MCF 10A (cell line): ENCODE measurements at regions of chr6 and their contacts with region 1.

Region 1: DNA sequence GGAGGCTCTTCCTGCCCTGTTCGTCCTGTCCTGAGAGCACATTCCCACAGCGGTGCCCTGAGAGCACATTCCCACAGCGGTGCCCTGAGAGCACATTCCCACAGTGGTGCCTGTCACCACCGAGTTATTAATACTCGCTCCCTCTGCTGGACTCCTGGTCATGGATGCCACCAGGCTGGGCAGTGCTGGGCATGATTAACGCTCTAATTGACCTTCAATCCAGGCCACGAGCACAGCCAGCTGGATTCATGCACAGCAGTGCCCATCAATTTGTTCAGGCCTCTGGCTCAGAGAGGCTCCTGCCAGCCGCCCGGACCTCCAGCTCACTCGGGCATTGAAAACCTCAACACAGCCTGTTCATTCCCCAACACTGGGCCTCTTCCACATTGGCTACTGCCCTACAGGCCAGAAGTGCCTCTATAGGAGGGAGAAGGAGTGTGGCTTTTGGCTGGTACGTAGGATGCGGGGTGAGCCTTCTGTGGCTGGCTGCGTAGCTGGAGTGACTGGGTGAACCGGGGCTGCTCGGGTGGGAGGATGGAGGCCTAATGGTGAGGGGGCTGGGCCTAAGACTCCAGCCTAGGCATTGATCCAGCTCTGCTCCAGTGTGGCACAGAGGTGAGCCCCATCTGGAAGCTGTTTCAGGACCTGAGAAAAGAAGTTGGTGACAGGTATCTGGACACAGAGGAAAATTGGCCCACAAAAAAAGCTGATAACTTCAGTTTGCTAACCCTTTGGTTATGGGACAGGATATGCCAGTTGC is 9.3 kb downstream of the IP6K3 start:
- DNase-seq: no peak
- H3K4me3 Mint-ChIP-seq: no peak overlapping the region
- H3K27ac Mint-ChIP-seq: no peak overlapping the region
- H3K4me1 Mint-ChIP-seq: peaks cover 5% of the 10 kb centered on the region
- H3K27me3 Mint-ChIP-seq: no peaks in the 10 kb centered on the region
- CTCF ChIP-seq: no peak

Region 2: GRCh38 chr6:33592411-33593054 is 144.9 kb before region 1 on chr6:
- CTCF ChIA-PET with region 1: no interaction called
- POLR2A ChIA-PET with region 1: no interaction called
- intact Hi-C with region 1: no loop called
- DNase-seq: no peak
- H3K4me3 Mint-ChIP-seq: no peak overlapping the region
- H3K27ac Mint-ChIP-seq: peak overlapping the region; percentile 11
- H3K4me1 Mint-ChIP-seq: peaks cover 31% of the 10 kb centered on the region
- H3K27me3 Mint-ChIP-seq: no peaks in the 10 kb centered on the region
- CTCF ChIP-seq: no peak

Region 3: DNA sequence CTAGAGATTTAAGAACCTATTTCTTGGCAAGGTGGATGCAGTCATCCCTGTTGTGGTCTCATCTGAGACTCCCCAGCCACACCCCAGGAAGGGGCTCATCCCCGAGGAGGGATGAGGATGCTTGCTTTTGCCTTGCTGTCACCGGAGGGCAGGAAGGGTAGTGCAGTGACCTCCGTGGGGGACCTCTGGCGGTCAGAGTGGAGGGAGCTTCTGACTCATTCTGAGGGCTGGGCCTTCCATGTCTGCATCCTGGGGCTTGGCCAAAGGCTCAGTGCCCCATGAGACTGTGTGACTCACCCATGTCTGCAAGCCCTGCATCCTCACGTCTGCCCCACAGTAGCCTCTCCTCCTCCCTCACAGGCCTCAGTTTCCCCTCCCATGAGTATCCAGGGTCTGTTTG is 64.6 kb before region 1 on chr6:
- CTCF ChIA-PET with region 1: no interaction called
- POLR2A ChIA-PET with region 1: no interaction called
- intact Hi-C with region 1: no loop called
- DNase-seq: peak; percentile 96
- H3K4me3 Mint-ChIP-seq: no peak overlapping the region
- H3K27ac Mint-ChIP-seq: peak overlapping the region; percentile 83
- H3K4me1 Mint-ChIP-seq: peaks cover 10% of the 10 kb centered on the region
- H3K27me3 Mint-ChIP-seq: no peaks in the 10 kb centered on the region
- CTCF ChIP-seq: peak; percentile 57

Region 4: DNA sequence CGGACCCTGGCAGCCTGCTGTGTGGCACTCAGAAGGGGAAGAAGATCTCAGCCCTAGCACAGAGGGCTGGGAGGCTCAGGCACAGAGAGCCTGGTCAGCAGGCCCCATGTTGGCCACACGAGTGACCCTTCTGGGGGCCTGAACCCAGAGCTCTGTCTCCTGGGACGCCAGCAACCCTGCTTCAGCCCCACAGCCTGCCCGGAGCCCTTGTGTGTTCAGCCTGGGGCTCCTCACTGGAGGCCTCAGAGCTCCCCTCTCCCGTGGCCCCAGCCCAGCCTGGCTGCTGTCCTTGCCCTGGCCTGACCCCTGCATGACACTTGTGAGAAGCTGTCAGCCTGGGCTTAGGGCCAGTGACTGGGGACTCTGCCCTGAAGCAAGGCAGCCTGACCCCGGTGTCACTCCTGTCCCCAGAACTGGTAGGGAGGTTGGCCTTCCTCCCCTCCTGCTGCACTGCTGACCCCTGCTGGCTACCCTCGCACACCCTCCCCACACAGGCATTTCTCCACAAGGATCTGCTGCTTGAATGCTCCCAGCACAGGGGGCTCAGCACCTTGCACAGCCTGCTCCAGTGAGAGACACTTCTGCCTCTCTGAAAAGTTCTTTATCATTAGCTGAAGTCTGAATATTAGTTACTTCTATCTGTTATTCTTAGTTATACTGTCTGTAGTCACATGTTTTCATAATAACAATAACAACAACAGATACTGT is 24.6 kb after region 1 on chr6:
- CTCF ChIA-PET with region 1: interaction called, 228 read pairs
- POLR2A ChIA-PET with region 1: no interaction called
- intact Hi-C with region 1: no loop called
- DNase-seq: peak; percentile 75
- H3K4me3 Mint-ChIP-seq: no peak overlapping the region
- H3K27ac Mint-ChIP-seq: no peak overlapping the region
- H3K4me1 Mint-ChIP-seq: peaks cover 15% of the 10 kb centered on the region
- H3K27me3 Mint-ChIP-seq: no peaks in the 10 kb centered on the region
- CTCF ChIP-seq: peak; percentile 80